ENCODE measurements at regions of chr14 and their contacts with region 1.

Region 1: DNA sequence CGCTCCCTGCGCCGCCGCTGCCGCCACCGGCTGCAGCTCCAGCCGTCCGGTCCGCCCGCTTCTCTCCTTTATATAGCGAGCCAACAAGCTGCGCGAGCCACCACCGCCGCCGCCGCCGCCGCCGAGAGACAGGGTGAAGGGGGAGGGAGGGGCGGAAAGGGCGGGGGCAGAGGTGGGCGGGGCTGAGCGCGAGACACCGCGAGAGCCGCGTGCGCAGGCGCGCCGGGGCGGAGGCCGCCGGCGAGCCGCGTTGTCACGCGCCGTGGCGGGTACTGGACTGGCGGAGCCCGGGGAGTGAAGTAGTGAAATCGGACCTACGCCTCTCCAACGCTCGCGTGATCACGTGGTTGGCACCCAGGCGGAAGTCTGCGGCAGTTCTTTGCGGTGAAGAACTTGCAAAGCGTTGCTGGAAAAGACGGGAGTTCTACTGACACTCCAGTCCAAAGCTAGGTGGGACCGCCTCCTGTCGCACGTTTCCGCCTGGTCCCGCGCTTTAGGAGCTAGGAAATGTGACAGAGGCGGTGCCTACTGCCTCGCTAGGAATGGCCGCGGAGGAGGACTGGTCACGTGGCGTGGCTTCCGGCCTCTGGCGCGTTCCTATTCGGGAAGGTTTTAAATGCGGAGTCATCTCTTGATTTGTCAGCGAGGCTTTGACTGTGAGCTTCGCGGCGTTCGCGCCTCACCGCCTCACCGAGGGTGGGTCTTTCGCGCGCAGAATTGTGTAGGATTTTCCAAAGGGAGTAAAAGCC is at the start of gene GTF2A1:
- DNase-seq: peak; percentile 89
- ATAC-seq: peak; percentile 87
- H3K4me3 ChIP-seq: peak within 1 kb of the TSS; percentile 91 to 92
- H3K27ac ChIP-seq: peak within 1 kb of the TSS; percentile 95
- H3K4me1 ChIP-seq: peaks cover 7 to 20% of the 10 kb centered on the region in 2 experiments
- H3K27me3 ChIP-seq: no peaks in the 10 kb centered on the region
- CTCF ChIP-seq: no peak
- POLR2A ChIP-seq: peak; percentile 86
- RAD21 ChIP-seq: no peak
- total RNA-seq, gene GTF2A1: 39.7 TPM

Region 2: GRCh38 chr14:80941241-80942182 is 279.5 kb before region 1 on chr14 and contains the start of gene CEP128:
- CTCF ChIA-PET with region 1: no interaction called
- POLR2A ChIA-PET with region 1: interaction called, 5 read pairs
- RAD21 ChIA-PET with region 1: no interaction called
- intact Hi-C with region 1: loop called (anchors 5 kb)
- DNase-seq: peak; percentile 97
- ATAC-seq: peak; percentile 98
- H3K4me3 ChIP-seq: peak within 1 kb of the TSS; percentile 62 to 89
- H3K27ac ChIP-seq: peak within 1 kb of the TSS; percentile 44
- H3K4me1 ChIP-seq: peaks cover 4 to 29% of the 10 kb centered on the region in 2 experiments; a peak in 2 of 4 replicates
- H3K27me3 ChIP-seq: no peaks in the 10 kb centered on the region
- CTCF ChIP-seq: no peak
- POLR2A ChIP-seq: peak; percentile 51
- RAD21 ChIP-seq: no peak
- total RNA-seq, gene CEP128: 16.4 TPM

Region 3: DNA sequence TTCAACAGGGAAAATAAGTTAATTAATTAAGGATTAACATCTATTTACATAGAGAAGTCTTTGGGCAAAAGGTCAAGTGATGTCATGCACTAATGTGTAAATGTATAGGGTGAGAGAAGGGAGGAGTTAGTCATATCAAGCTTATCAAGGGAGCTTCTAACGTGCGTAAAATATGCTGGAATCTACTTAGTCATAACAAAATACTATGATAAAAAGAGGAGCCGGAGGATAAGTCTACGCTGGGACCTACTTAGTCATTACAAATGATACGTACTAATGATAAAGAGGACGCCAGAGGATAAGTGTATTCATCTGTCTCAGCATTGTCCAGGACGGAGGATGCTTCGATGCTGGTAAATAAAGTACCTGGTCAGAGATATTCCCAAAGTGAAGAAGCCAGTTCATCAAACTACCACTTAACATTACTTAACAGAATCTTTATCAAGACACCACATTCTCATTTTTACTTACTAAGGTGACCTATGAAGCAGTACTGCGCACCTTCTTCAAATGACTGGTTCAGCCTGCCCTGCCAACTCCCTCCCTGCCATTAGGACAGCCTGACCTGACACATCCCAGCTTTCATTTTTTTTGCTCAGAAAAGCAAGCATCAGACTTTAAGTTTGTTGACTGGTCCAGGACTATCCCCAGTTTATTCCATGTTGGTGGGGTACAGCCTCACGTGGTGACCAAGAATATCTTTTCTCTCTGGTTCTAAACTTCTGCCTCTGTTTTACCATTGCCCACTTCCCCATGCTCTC is 66.2 kb after region 1 on chr14:
- CTCF ChIA-PET with region 1: no interaction called
- POLR2A ChIA-PET with region 1: no interaction called
- RAD21 ChIA-PET with region 1: no interaction called
- intact Hi-C with region 1: no loop called
- DNase-seq: no peak
- ATAC-seq: no peak
- H3K4me3 ChIP-seq: no peak overlapping the region
- H3K27ac ChIP-seq: no peak overlapping the region
- H3K4me1 ChIP-seq: no peaks in the 10 kb centered on the region
- H3K27me3 ChIP-seq: no peaks in the 10 kb centered on the region
- CTCF ChIP-seq: no peak
- POLR2A ChIP-seq: no peak
- RAD21 ChIP-seq: no peak